ENCODE measurements at regions of chr10 and their contacts with region 1.

Region 1: DNA sequence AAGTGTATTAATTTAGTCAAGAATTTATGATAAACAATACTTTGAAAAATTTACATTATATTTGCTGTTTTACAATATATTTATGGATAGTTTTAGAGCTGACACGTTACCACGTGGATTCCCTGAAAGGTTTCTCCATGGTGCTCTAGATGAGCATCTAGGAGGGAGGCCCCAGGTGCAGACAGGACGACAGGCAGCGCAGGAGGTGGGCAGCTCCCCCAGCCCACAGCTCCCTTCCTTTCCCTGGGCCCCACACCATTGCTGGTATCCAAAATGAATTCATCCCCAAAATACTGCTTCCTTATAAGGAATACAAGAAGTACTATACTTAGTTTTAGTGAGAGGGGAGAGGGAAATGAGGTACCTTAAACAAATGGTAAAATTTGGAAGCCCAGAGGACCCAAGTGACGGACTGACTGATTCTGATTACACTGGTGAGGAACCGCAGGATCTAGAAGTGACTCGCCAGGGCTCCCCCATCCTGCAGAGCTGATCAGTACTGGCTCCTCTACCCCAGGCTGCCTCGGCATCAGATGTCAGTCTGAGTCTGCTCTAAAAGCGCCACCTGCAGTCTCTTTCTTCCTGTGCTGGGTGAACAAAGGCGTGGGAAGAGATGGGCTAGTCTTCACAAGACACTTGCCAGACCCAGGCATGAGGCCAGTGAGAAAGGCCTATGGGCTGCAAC is 89.2 kb downstream of the DLG5 start:
- DNase-seq: peak; percentile 37 to 76 (median 54)
- H3K4me3 ChIP-seq: no peak overlapping the region
- H3K4me3 Mint-ChIP-seq: peak overlapping the region in 6 of 7 donors; percentile 15 to 82 (median 42)
- H3K27ac ChIP-seq: no peak overlapping the region
- H3K27ac Mint-ChIP-seq: peak overlapping the region in 7 of 8 donors; percentile 77 to 99 (median 92)
- H3K4me1 ChIP-seq: peaks cover 21% of the 10 kb centered on the region
- H3K4me1 Mint-ChIP-seq: peaks cover 22 to 30% (median 30%) of the 10 kb centered on the region in 3 donors
- H3K27me3 ChIP-seq: no peaks in the 10 kb centered on the region
- H3K27me3 Mint-ChIP-seq: no peaks in the 10 kb centered on the region

Region 2: DNA sequence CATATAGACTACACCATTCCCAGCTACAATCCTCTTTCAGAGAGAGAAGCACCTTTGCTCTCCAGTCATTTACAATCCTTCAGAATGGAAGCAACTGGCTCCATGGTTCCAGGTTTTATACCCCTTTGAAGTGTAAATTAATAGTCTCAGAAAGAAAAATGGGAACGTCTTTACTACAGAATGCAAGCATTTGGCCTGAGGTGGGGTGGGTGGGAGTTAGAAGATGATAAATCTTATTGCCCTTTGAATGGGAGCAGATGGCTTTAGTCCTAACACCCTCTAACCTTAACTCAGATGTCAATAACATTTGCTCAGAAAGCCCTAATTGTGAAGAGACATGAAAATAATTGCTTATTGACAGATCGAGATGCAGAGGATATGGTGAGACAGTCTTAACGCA is 115.6 kb before region 1 on chr10:
- CTCF ChIA-PET with region 1: interaction called, 20 read pairs
- POLR2A ChIA-PET with region 1: no interaction called
- DNase-seq: no peak
- H3K4me3 ChIP-seq: no peak overlapping the region
- H3K4me3 Mint-ChIP-seq: no peak overlapping the region
- H3K27ac ChIP-seq: no peak overlapping the region
- H3K27ac Mint-ChIP-seq: no peak overlapping the region
- H3K4me1 ChIP-seq: no peaks in the 10 kb centered on the region
- H3K4me1 Mint-ChIP-seq: peaks cover 0 to 2% (median 0%) of the 10 kb centered on the region in 3 donors
- H3K27me3 ChIP-seq: no peaks in the 10 kb centered on the region
- H3K27me3 Mint-ChIP-seq: peaks cover 2 to 13% of the 10 kb centered on the region in 2 donors

Measured in CD8-positive, alpha-beta memory T cell (primary cell).